K562 (cell line): ENCODE measurements at regions of chr1 and their contacts with region 1.

Region 1: GRCh38 chr1:16236511-16237342 is at the start of gene CPLANE2:
- DNase-seq: peak; percentile 98 to 99 (median 99)
- ATAC-seq: peak; percentile 97
- H3K4me3 ChIP-seq: peak within 1 kb of the TSS; percentile 64
- H3K27ac ChIP-seq: peak within 1 kb of the TSS; percentile 77
- H3K4me1 ChIP-seq: peaks cover 27 to 30% of the 10 kb centered on the region in 2 experiments; a peak in 4 of 5 replicates
- H3K27me3 ChIP-seq: no peaks in the 10 kb centered on the region
- CTCF ChIP-seq: 0 out of 6 replicates have a peak, but pooled peaks of 1 of the 3 experiments have one; percentile 17
- EP300 ChIP-seq: peak; percentile 12; the same call in 1 of the 2 replicates
- POLR2A ChIP-seq: no peak; the same call in 1 of the 2 replicates
- RAD21 ChIP-seq: no peak
- polyA plus RNA-seq, gene CPLANE2: 0.17 to 0.32 TPM

Region 2: DNA sequence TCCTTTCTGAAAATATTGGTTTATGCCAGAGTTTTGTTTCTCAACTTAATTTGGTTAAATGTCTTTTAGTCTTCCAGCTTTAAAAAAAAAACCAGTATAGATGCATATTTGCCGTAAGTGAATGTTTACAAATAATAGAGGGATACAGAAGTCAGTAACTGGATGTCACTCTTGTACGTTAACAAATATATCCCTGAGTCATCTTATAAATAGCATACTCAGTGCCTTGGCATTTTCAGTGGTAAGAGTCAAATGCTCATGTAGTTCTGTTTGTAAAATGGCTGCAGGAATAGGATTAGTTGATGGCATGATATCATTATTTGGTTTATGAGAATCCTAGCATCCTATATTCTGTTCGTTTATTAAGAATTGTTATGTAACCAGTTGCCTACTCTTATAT is 333.8 kb before region 1 on chr1:
- CTCF ChIA-PET with region 1: no interaction called
- POLR2A ChIA-PET with region 1: no interaction called
- in situ Hi-C with region 1: no loop called
- intact Hi-C with region 1: no loop called
- DNase-seq: no peak
- ATAC-seq: no peak
- H3K4me3 ChIP-seq: no peak overlapping the region
- H3K27ac ChIP-seq: no peak overlapping the region
- H3K4me1 ChIP-seq: peaks cover 0 to 6% of the 10 kb centered on the region in 2 experiments; a peak in 4 of 5 replicates
- H3K27me3 ChIP-seq: no peaks in the 10 kb centered on the region
- CTCF ChIP-seq: no peak
- EP300 ChIP-seq: no peak
- POLR2A ChIP-seq: no peak
- RAD21 ChIP-seq: no peak

Region 3: GRCh38 chr1:16206547-16207317 is 30.0 kb before region 1 on chr1:
- CTCF ChIA-PET with region 1: no interaction called
- POLR2A ChIA-PET with region 1: interaction called, 7 read pairs
- in situ Hi-C with region 1: no loop called
- intact Hi-C with region 1: loop called (anchors 2 kb)
- DNase-seq: peak; percentile 96 to 100 (median 96)
- ATAC-seq: peak; percentile 94
- H3K4me3 ChIP-seq: peak overlapping the region; percentile 54
- H3K27ac ChIP-seq: peak overlapping the region; percentile 97
- H3K4me1 ChIP-seq: peaks cover 26 to 53% of the 10 kb centered on the region in 2 experiments
- H3K27me3 ChIP-seq: no peaks in the 10 kb centered on the region
- CTCF ChIP-seq: 0 out of 6 replicates have a peak, but pooled peaks of 1 of the 3 experiments have one; percentile 2
- EP300 ChIP-seq: no peak
- POLR2A ChIP-seq: peak; percentile 97
- RAD21 ChIP-seq: 0 out of 4 replicates have a peak, but pooled peaks of 1 of the 2 experiments have one; percentile 2

Region 4: GRCh38 chr1:16217061-16217785 is 19.5 kb before region 1 on chr1:
- CTCF ChIA-PET with region 1: no interaction called
- POLR2A ChIA-PET with region 1: interaction called, 13 read pairs
- in situ Hi-C with region 1: no loop called
- intact Hi-C with region 1: loop called (anchors 1 kb)
- DNase-seq: peak; percentile 99 to 100 (median 100)
- ATAC-seq: peak; percentile 97
- H3K4me3 ChIP-seq: peak overlapping the region; percentile 41
- H3K27ac ChIP-seq: peak overlapping the region; percentile 4; the same call in 2 of the 3 replicates
- H3K4me1 ChIP-seq: peaks cover 15 to 32% of the 10 kb centered on the region in 2 experiments; a peak in 4 of 5 replicates
- H3K27me3 ChIP-seq: no peaks in the 10 kb centered on the region
- CTCF ChIP-seq: no peak
- EP300 ChIP-seq: no peak
- POLR2A ChIP-seq: peak; percentile 46; the same call in 1 of the 2 replicates
- RAD21 ChIP-seq: no peak